Activated CD4-positive, alpha-beta memory T cell treated with anti-CD3 and anti-CD28 coated beads for 36 hours (primary cell): ENCODE measurements at regions of chr13 and their contacts with region 1.

Region 1: GRCh38 chr13:46831588-46832194 is 34.7 kb upstream of the ESD start:
- DNase-seq: peak; percentile 24
- H3K4me3 Mint-ChIP-seq: no peak overlapping the region
- H3K27ac Mint-ChIP-seq: no peak overlapping the region
- H3K4me1 Mint-ChIP-seq: no peaks in the 10 kb centered on the region
- H3K27me3 Mint-ChIP-seq: no peaks in the 10 kb centered on the region

Region 2: DNA sequence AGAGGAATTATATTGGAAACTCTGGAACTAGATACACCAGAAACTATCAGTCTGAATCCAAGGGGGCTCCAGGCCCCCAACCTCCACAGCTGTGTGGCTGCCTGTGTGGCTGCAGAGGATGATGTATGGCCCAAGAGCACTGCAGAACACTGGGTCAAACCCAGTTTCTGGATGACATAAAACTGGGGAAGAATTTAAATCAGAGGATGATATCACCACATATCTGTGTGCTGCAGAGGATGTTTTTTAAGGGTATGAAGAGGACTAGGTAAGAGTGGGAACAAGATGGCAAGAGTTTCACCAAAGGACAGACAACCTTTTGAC is 942.9 kb after region 1 on chr13:
- CTCF ChIA-PET with region 1: interaction called, 16 read pairs
- POLR2A ChIA-PET with region 1: no interaction called
- intact Hi-C with region 1: loop called (anchors 1 kb)
- DNase-seq: no peak
- H3K4me3 Mint-ChIP-seq: no peak overlapping the region
- H3K27ac Mint-ChIP-seq: no peak overlapping the region
- H3K4me1 Mint-ChIP-seq: no peaks in the 10 kb centered on the region
- H3K27me3 Mint-ChIP-seq: no peaks in the 10 kb centered on the region